Natural killer cell (primary cell): ENCODE measurements at regions of chr11 and their contacts with region 1.

Region 1: DNA sequence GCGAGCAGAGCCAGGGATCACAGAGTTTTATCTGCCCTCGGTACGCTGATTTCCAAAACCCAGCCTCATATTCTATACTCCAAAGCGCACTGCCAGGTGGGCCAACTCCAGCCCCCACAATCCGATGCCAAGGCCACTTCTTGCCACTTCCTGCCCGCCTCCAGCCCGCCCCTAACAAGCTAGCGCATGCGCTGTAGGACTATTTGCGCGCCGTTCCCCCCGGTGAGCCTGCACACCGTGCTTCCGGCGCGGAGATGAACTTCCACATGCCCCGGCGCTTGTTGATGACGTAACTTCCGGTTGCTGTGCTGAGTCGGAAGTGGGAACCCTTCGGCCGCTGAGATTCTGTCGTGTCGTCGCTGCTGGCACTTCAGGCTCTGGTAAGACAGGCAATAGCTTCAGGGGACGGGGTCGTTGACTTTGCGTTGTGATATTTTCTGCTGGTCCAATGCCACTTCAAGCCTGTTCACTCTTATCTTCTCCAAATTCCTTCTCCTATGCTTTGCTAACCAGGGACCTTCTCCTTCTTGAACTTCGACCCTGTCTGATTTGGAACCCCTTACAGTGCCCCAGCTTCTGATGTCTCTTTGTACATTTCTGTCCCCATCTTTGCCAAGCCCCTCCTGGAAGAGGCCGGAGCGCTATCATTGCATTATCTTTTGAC is at the start of gene UBE4A:
- DNase-seq: peak; percentile 93 to 99
- ATAC-seq: peak; percentile 90 to 95 (median 90)
- H3K4me3 ChIP-seq: peak within 1 kb of the TSS; percentile 66
- H3K4me3 Mint-ChIP-seq: peak within 1 kb of the TSS; percentile 98
- H3K27ac ChIP-seq: peak within 1 kb of the TSS; percentile 75
- H3K27ac Mint-ChIP-seq: peak within 1 kb of the TSS; percentile 97 to 100
- H3K4me1 ChIP-seq: peaks cover 13% of the 10 kb centered on the region
- H3K4me1 Mint-ChIP-seq: peaks cover 35 to 42% of the 10 kb centered on the region in 2 donors
- H3K27me3 ChIP-seq: no peaks in the 10 kb centered on the region
- H3K27me3 Mint-ChIP-seq: no peaks in the 10 kb centered on the region
- CTCF ChIP-seq: no peak
- total RNA-seq, gene UBE4A: 35.1 to 43.9 (median 37.0) TPM

Region 2: DNA sequence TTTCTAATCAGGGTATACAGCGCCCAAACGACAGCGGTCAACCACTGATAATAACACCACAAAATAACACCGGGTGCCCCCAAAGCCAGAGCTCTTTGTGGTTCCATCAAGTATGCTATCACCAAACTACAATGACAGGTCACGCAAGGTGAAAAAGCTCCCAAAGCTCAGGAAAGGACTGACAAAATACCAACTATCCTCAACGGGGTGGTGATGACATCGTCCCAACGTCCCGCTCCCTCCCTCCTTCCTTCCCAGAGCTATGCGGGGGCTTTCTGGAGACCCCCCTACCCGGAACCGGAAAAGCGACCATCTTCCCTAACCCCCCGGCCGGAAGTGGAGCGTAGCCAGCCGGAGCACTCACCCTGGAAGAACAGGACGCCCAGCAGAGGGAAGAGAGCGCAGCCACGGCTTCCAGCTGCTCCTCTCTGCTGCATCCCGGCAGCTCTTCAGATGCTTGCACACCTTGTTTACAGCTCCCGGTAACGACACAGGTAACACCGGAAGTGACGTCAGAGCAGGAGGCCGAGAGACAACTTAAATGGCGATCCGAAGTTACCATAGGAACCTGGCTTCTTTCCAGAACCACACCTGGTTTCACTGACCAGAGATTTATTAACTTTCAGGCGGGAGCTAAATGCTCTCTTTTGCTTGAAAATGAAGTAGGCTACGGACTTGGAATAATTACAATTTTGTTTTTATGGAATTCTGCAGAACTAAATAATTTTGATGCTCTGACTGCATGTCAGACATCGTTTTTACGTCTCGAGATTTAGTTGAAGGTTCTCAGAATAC is 107.4 kb before region 1 on chr11 and contains the start of gene MPZL3:
- intact Hi-C with region 1: loop called (anchors 5 kb)
- DNase-seq: peak; percentile 76 to 97
- ATAC-seq: peak; percentile 75 to 83 (median 82)
- H3K4me3 ChIP-seq: peak within 1 kb of the TSS; percentile 82
- H3K4me3 Mint-ChIP-seq: peak within 1 kb of the TSS; percentile 98
- H3K27ac ChIP-seq: peak within 1 kb of the TSS; percentile 95
- H3K27ac Mint-ChIP-seq: peak within 1 kb of the TSS; percentile 98
- H3K4me1 ChIP-seq: peaks cover 8% of the 10 kb centered on the region
- H3K4me1 Mint-ChIP-seq: peaks cover 17 to 22% of the 10 kb centered on the region in 2 donors
- H3K27me3 ChIP-seq: no peaks in the 10 kb centered on the region
- H3K27me3 Mint-ChIP-seq: no peaks in the 10 kb centered on the region
- CTCF ChIP-seq: no peak
- total RNA-seq, gene MPZL3: 6.3 to 7.5 (median 6.7) TPM

Region 3: GRCh38 chr11:118338637-118339061 is 20.8 kb before region 1 on chr11:
- intact Hi-C with region 1: no loop called
- DNase-seq: peak; percentile 62 to 96
- ATAC-seq: peak; percentile 75 to 88 (median 85)
- H3K4me3 ChIP-seq: no peak overlapping the region
- H3K4me3 Mint-ChIP-seq: peak overlapping the region; percentile 82
- H3K27ac ChIP-seq: peak overlapping the region; percentile 81
- H3K27ac Mint-ChIP-seq: peak overlapping the region; percentile 95 to 97
- H3K4me1 ChIP-seq: peaks cover 41% of the 10 kb centered on the region
- H3K4me1 Mint-ChIP-seq: peaks cover 40 to 42% of the 10 kb centered on the region in 2 donors
- H3K27me3 ChIP-seq: no peaks in the 10 kb centered on the region
- H3K27me3 Mint-ChIP-seq: no peaks in the 10 kb centered on the region
- CTCF ChIP-seq: no peak

Region 4: DNA sequence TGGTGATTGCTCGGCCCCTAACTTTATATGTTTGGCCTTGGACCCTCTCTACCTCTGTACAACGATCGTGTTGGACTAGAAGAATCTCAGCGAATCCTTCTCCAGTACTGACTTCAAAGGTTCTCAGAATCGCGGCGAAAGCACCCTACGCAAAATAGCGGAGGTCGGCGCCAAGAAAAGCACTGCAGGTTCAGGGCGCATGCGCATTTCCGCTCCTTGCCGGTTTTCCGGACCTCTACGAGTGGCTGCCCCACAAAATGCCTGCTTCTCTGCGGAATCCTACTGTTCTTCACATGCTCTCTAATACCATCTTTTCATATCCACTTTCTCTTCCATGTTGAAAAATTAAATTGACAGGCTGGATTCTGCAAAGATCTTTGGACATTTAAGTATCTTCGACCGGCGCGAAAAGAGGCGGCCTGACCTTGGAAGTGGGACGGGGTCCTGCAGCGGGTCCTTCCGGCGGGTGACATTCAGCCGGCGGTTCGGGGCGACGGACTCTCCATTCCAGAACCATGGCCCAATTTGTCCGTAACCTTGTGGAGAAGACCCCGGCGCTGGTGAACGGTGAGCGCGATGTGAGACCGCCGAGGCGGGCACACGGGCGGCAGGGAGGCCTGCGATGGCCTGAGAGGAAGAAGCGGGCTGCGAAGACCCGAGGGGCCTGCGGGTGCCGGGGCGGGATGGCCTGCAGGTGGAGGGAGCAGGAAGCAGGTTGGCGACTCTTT is 41.9 kb after region 1 on chr11 and contains the start of gene ATP5MG:
- intact Hi-C with region 1: loop called (anchors 1 kb)
- DNase-seq: peak; percentile 83 to 98
- ATAC-seq: peak; percentile 81 to 84 (median 83)
- H3K4me3 ChIP-seq: peak within 1 kb of the TSS; percentile 77
- H3K4me3 Mint-ChIP-seq: peak within 1 kb of the TSS; percentile 100
- H3K27ac ChIP-seq: peak within 1 kb of the TSS; percentile 86
- H3K27ac Mint-ChIP-seq: peak within 1 kb of the TSS; percentile 99
- H3K4me1 ChIP-seq: peaks cover 15% of the 10 kb centered on the region
- H3K4me1 Mint-ChIP-seq: peaks cover 43 to 50% of the 10 kb centered on the region in 2 donors
- H3K27me3 ChIP-seq: no peaks in the 10 kb centered on the region
- H3K27me3 Mint-ChIP-seq: no peaks in the 10 kb centered on the region
- CTCF ChIP-seq: no peak
- total RNA-seq, gene ATP5MG: 90.3 to 135 (median 107) TPM

Region 5: DNA sequence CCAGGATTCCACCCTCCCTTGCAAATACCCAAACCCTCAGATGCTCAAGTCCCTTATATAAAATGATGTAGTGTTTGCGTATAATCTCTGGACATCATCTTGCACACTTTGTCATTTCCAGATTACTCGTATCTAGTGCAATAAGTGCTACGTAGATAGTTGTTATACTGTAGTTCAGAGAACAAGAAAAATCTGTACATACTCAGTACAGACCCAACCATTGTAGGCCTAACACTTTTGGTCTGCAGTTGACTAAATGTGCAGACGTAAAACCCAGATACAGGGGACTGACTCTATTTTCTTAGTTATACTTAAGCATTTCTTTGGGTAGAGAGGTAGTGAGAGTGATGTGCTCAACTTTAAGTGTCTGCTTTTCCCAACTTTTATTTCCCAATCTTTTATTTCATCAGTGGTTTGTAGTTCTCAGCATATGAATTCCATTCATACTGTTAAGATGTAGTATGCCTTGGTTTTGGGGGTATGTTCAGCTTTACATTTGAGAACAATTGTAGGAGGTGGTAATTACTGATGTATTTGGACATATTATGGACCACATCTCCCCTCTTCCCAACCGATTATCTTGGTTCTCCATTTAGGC is 387.7 kb after region 1 on chr11:
- intact Hi-C with region 1: no loop called
- DNase-seq: no peak
- ATAC-seq: no peak
- H3K4me3 ChIP-seq: no peak overlapping the region
- H3K4me3 Mint-ChIP-seq: no peak overlapping the region
- H3K27ac ChIP-seq: no peak overlapping the region
- H3K27ac Mint-ChIP-seq: peak overlapping the region; percentile 70 to 74
- H3K4me1 ChIP-seq: no peaks in the 10 kb centered on the region
- H3K4me1 Mint-ChIP-seq: peaks cover 14 to 17% of the 10 kb centered on the region in 2 donors
- H3K27me3 ChIP-seq: no peaks in the 10 kb centered on the region
- H3K27me3 Mint-ChIP-seq: no peaks in the 10 kb centered on the region
- CTCF ChIP-seq: no peak